ENCODE measurements at regions of chr1 and their contacts with region 1.

Region 1: GRCh38 chr1:151399890-151400495 is 620 bp downstream of the PSMB4 start:
- DNase-seq: no peak
- ATAC-seq: peak; percentile 35

Region 2: GRCh38 chr1:151309811-151310323 is 90.1 kb before region 1 on chr1:
- intact Hi-C with region 1: loop called in 1 of 2 experiments (anchors 10 kb)
- DNase-seq: no peak
- ATAC-seq: no peak